AG04449 (cell line): ENCODE measurements at regions of chr11 and their contacts with region 1.

Region 1: GRCh38 chr11:94171693-94172440 is 43.2 kb downstream of the PANX1 start:
- DNase-seq: no peak
- H3K4me3 ChIP-seq: no peak overlapping the region
- CTCF ChIP-seq: peak; percentile 81

Region 2: GRCh38 chr11:94142308-94143281 is 29.3 kb before region 1 on chr11:
- CTCF ChIA-PET with region 1: interaction called, 13 read pairs
- POLR2A ChIA-PET with region 1: no interaction called
- DNase-seq: no peak
- H3K4me3 ChIP-seq: no peak overlapping the region
- CTCF ChIP-seq: no peak

Region 3: GRCh38 chr11:94151903-94152677 is 19.8 kb before region 1 on chr11:
- CTCF ChIA-PET with region 1: interaction called, 19 read pairs
- POLR2A ChIA-PET with region 1: interaction called, 6 read pairs
- DNase-seq: no peak
- H3K4me3 ChIP-seq: no peak overlapping the region
- CTCF ChIP-seq: no peak

Region 4: GRCh38 chr11:94417386-94417987 is 245.6 kb after region 1 on chr11:
- CTCF ChIA-PET with region 1: interaction called, 56 read pairs
- POLR2A ChIA-PET with region 1: no interaction called
- DNase-seq: peak; percentile 14
- H3K4me3 ChIP-seq: no peak overlapping the region
- CTCF ChIP-seq: peak; percentile 51

Region 5: GRCh38 chr11:94424662-94425061 is 252.8 kb after region 1 on chr11:
- CTCF ChIA-PET with region 1: interaction called, 56 read pairs
- POLR2A ChIA-PET with region 1: no interaction called
- DNase-seq: no peak
- H3K4me3 ChIP-seq: no peak overlapping the region
- CTCF ChIP-seq: no peak

Region 6: DNA sequence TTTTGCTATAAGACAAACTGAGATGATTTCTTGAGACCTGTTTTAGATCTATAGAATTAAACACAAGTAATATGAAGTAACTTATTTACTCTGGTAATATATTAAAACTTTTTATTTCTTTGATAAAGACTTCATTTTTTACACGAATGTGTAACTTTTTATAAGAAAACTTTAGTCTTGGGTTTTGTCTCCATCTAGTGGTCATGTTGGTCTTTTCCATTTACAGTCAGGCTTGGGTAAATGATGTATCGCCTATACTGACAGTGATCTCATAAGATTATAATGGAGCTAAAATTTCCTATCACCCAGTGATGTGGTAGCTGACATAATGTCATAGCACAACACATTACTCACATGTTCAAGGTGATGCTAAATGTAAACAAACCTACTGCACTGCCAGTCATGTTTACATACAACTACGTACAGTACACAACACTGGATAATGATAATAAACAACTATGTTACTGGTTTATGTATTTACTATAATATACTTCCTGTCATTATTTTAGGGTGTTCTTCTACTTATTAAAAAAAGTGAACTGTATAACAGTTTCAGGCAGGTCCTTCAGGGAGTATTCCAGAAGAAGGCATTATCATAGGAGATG is 332.9 kb after region 1 on chr11:
- CTCF ChIA-PET with region 1: interaction called, 28 read pairs
- POLR2A ChIA-PET with region 1: no interaction called
- DNase-seq: no peak
- H3K4me3 ChIP-seq: no peak overlapping the region
- CTCF ChIP-seq: peak; percentile 26